ENCODE measurements at regions of chr4 and their contacts with region 1.

Region 1: GRCh38 chr4:121900132-121900983 is 30.1 kb upstream of the BBS7 start:
- DNase-seq: peak; percentile 44
- H3K4me3 ChIP-seq: no peak overlapping the region
- H3K27ac ChIP-seq: no peak overlapping the region
- H3K4me1 ChIP-seq: no peaks in the 10 kb centered on the region
- H3K27me3 ChIP-seq: no peaks in the 10 kb centered on the region
- CTCF ChIP-seq: peak; percentile 59

Region 2: DNA sequence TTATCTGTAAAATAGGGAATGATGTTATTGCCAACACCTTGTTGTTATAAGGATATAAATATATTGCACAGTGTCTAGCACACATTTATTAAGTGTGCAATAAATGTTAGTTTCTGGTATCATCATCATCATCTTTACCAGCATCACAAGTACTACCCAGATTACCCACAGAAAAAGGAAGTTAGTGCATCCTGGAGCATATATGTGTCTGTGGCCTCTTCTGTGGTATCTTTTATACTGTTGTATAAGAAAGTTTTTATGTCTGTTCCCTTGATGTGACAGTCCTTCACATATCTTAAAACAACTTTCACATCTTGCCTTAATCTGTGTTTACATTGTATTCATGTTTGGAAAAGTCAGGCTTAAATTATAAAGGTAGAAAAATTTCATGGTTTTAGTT is 89.2 kb before region 1 on chr4:
- intact Hi-C with region 1: no loop called
- DNase-seq: no peak
- H3K4me3 ChIP-seq: no peak overlapping the region
- H3K27ac ChIP-seq: no peak overlapping the region
- H3K4me1 ChIP-seq: no peaks in the 10 kb centered on the region
- H3K27me3 ChIP-seq: no peaks in the 10 kb centered on the region
- CTCF ChIP-seq: no peak

Region 3: DNA sequence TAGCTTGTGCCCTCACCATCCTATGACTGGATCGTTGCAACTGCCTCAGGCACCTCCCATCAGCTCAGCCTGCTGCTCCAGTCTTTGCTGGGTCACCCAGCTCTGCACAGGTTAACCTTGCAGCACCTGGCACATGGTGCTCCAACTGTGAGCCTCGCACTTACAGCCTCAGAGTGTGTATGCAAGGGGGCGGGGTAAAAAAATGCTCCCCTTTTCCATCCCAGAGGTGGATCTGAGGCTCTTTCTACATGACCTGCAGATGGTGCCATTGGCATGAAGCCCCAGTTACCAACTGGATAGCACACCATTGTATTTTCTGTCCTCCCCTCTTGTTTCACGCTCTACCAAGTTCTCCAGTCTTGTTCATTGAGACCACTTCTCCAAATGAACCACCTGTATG is 97.6 kb after region 1 on chr4:
- intact Hi-C with region 1: loop called (anchors 5 kb)
- DNase-seq: no peak
- H3K4me3 ChIP-seq: no peak overlapping the region
- H3K27ac ChIP-seq: no peak overlapping the region
- H3K4me1 ChIP-seq: no peaks in the 10 kb centered on the region
- H3K27me3 ChIP-seq: no peaks in the 10 kb centered on the region
- CTCF ChIP-seq: no peak

Region 4: GRCh38 chr4:122131562-122132157 is 231.3 kb after region 1 on chr4:
- intact Hi-C with region 1: no loop called
- DNase-seq: no peak
- H3K4me3 ChIP-seq: no peak overlapping the region
- H3K27ac ChIP-seq: no peak overlapping the region
- H3K4me1 ChIP-seq: no peaks in the 10 kb centered on the region
- H3K27me3 ChIP-seq: no peaks in the 10 kb centered on the region
- CTCF ChIP-seq: no peak

Region 5: DNA sequence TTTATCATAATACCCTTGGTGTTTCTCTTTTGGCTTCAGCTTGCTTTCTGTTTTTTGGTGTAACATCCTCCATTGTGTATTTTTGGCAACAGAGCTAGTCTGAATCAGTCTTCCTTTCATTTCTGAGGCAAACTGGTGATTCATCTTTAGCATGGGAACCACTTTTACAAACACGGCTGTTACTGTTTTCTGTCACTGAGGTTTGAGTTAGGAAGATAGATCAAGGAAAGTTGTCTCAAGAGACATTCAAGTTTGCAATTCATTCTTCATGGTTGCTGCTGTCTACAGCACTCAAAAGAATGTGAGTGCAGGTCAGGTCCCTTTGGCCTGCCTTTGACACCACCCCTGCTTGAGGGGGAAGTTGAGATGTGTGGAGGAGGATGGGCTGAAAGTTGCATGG is 684.2 kb after region 1 on chr4:
- intact Hi-C with region 1: loop called (anchors 10 kb)
- DNase-seq: no peak
- H3K4me3 ChIP-seq: no peak overlapping the region
- H3K27ac ChIP-seq: no peak overlapping the region
- H3K4me1 ChIP-seq: no peaks in the 10 kb centered on the region
- H3K27me3 ChIP-seq: no peaks in the 10 kb centered on the region
- CTCF ChIP-seq: no peak